Naive thymus-derived CD4-positive, alpha-beta T cell (primary cell): ENCODE measurements at regions of chr3 and their contacts with region 1.

Region 1: GRCh38 chr3:120095226-120095978 is 1.2 kb upstream of the GSK3B start:
- DNase-seq: peak; percentile 71 to 90 (median 79)
- ATAC-seq: peak; percentile 37
- H3K4me3 ChIP-seq: peak overlapping the region; percentile 69
- H3K4me3 Mint-ChIP-seq: no peak overlapping the region
- H3K27ac ChIP-seq: peak overlapping the region; percentile 92
- H3K27ac Mint-ChIP-seq: peak overlapping the region in 1 of 9 donors; percentile 99
- H3K4me1 ChIP-seq: peaks cover 11 to 26% of the 10 kb centered on the region in 2 donors
- H3K4me1 Mint-ChIP-seq: peaks cover 16 to 38% (median 31%) of the 10 kb centered on the region in 7 donors
- H3K27me3 ChIP-seq: no peaks in the 10 kb centered on the region
- H3K27me3 Mint-ChIP-seq: peaks cover 0 to 5% (median 0%) of the 10 kb centered on the region in 5 donors

Region 2: GRCh38 chr3:119463171-119464169 is 631.9 kb before region 1 on chr3 and contains the start of gene TMEM39A:
- CTCF ChIA-PET with region 1: no interaction called
- POLR2A ChIA-PET with region 1: interaction called, 4 read pairs
- intact Hi-C with region 1: loop called (anchors 1 kb)
- DNase-seq: peak; percentile 97 to 99 (median 98)
- ATAC-seq: peak; percentile 91
- H3K4me3 ChIP-seq: peak within 1 kb of the TSS; percentile 93
- H3K4me3 Mint-ChIP-seq: peak within 1 kb of the TSS; percentile 82 to 96 (median 93)
- H3K27ac ChIP-seq: peak within 1 kb of the TSS; percentile 86
- H3K27ac Mint-ChIP-seq: peak within 1 kb of the TSS; percentile 97 to 100 (median 99)
- H3K4me1 ChIP-seq: peaks cover 16 to 26% of the 10 kb centered on the region in 2 donors
- H3K4me1 Mint-ChIP-seq: peaks cover 22 to 56% (median 45%) of the 10 kb centered on the region in 7 donors
- H3K27me3 ChIP-seq: no peaks in the 10 kb centered on the region
- H3K27me3 Mint-ChIP-seq: peaks cover 0 to 4% (median 0%) of the 10 kb centered on the region in 5 donors
- total RNA-seq, gene TMEM39A: 34.9 to 59.5 (median 49.7) TPM

Region 3: GRCh38 chr3:119559441-119559963 is 535.9 kb before region 1 on chr3 and contains the start of gene CD80:
- CTCF ChIA-PET with region 1: no interaction called
- POLR2A ChIA-PET with region 1: no interaction called
- intact Hi-C with region 1: no loop called
- DNase-seq: peak in 7 of 9 donors; percentile 14 to 63 (median 33)
- ATAC-seq: peak; percentile 76
- H3K4me3 ChIP-seq: no peak within 1 kb of the TSS
- H3K4me3 Mint-ChIP-seq: peak within 1 kb of the TSS in 2 of 10 donors; percentile 12 to 81
- H3K27ac ChIP-seq: no peak within 1 kb of the TSS
- H3K27ac Mint-ChIP-seq: peak within 1 kb of the TSS in 2 of 9 donors; percentile 68 to 71
- H3K4me1 ChIP-seq: peaks cover 0 to 6% of the 10 kb centered on the region in 2 donors
- H3K4me1 Mint-ChIP-seq: peaks cover 0 to 64% (median 8%) of the 10 kb centered on the region in 7 donors
- H3K27me3 ChIP-seq: no peaks in the 10 kb centered on the region
- H3K27me3 Mint-ChIP-seq: peaks cover 0 to 5% (median 0%) of the 10 kb centered on the region in 5 donors
- total RNA-seq, gene CD80: 0.13 to 15.1 (median 1.2) TPM in 3 of 5 experiments, not detected in the others

Region 4: DNA sequence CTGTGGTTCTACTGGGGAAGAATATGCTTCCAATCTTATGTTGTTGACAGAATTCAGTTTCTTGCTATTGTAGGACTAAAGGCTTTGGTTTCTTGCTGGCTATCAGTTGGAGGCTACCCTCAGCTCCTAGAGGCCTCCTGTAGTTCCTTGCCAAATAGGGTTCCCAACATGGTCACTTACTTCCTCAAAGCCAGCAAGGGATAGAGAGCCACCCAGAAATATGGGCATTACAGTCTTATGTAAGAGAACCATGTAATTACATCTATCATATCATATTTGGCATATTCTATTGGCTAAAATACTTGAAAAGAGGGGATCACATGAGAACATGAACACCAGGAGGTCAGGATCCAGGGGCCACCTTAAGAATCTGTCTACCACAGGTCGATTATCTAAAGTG is 412.0 kb before region 1 on chr3:
- CTCF ChIA-PET with region 1: no interaction called
- POLR2A ChIA-PET with region 1: no interaction called
- intact Hi-C with region 1: no loop called
- DNase-seq: no peak
- ATAC-seq: no peak
- H3K4me3 ChIP-seq: no peak overlapping the region
- H3K4me3 Mint-ChIP-seq: no peak overlapping the region
- H3K27ac ChIP-seq: no peak overlapping the region
- H3K27ac Mint-ChIP-seq: no peak overlapping the region
- H3K4me1 ChIP-seq: no peaks in the 10 kb centered on the region
- H3K4me1 Mint-ChIP-seq: peaks cover 0 to 4% (median 0%) of the 10 kb centered on the region in 7 donors
- H3K27me3 ChIP-seq: no peaks in the 10 kb centered on the region
- H3K27me3 Mint-ChIP-seq: peaks cover 4 to 14% (median 9%) of the 10 kb centered on the region in 5 donors

Region 5: DNA sequence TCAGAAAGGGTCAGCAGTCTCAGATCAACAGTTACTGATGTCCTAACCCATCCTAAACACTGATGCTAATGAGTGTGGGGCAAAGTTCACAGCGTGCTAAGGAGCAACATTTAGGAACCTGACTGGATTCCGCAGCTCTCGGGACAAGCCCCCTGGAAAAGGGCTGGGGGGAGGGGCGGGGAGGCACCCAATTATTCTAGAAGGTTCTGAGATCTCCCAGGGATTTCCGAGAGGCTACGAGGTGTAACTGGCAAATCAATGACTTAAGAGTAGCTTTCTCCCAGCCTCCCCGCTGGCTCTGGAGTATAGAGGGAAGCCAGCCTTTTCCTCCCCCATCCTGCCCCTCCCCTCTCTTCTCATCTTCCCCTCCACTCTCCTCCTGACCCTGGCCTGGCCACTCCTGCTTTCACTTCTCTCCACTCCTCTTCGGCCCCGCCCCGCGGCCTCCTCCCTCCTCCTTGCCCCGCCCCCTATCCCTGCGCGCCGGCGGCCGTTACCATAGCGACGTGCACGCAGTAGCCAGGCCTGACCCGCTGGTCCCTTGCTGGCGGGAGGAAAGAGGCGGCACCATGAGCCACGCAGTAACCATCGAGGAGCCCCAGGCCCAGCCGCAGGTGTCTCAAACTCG is 392.8 kb before region 1 on chr3 and contains the start of gene CFAP91:
- CTCF ChIA-PET with region 1: no interaction called
- POLR2A ChIA-PET with region 1: no interaction called
- intact Hi-C with region 1: loop called in 1 of 2 experiments (anchors 2 kb)
- DNase-seq: peak; percentile 56 to 81 (median 63)
- ATAC-seq: peak; percentile 97
- H3K4me3 ChIP-seq: peak within 1 kb of the TSS; percentile 61
- H3K4me3 Mint-ChIP-seq: peak within 1 kb of the TSS; percentile 67 to 87 (median 82)
- H3K27ac ChIP-seq: peak within 1 kb of the TSS; percentile 16
- H3K27ac Mint-ChIP-seq: peak within 1 kb of the TSS in 6 of 9 donors; percentile 15 to 47 (median 43)
- H3K4me1 ChIP-seq: peaks cover 0 to 13% of the 10 kb centered on the region in 2 donors
- H3K4me1 Mint-ChIP-seq: peaks cover 16 to 36% (median 30%) of the 10 kb centered on the region in 7 donors
- H3K27me3 ChIP-seq: no peaks in the 10 kb centered on the region
- H3K27me3 Mint-ChIP-seq: peaks cover 0 to 33% (median 3%) of the 10 kb centered on the region in 5 donors
- total RNA-seq, gene CFAP91: 0.13 to 0.32 TPM in 2 of 5 experiments, not detected in the others

Region 6: DNA sequence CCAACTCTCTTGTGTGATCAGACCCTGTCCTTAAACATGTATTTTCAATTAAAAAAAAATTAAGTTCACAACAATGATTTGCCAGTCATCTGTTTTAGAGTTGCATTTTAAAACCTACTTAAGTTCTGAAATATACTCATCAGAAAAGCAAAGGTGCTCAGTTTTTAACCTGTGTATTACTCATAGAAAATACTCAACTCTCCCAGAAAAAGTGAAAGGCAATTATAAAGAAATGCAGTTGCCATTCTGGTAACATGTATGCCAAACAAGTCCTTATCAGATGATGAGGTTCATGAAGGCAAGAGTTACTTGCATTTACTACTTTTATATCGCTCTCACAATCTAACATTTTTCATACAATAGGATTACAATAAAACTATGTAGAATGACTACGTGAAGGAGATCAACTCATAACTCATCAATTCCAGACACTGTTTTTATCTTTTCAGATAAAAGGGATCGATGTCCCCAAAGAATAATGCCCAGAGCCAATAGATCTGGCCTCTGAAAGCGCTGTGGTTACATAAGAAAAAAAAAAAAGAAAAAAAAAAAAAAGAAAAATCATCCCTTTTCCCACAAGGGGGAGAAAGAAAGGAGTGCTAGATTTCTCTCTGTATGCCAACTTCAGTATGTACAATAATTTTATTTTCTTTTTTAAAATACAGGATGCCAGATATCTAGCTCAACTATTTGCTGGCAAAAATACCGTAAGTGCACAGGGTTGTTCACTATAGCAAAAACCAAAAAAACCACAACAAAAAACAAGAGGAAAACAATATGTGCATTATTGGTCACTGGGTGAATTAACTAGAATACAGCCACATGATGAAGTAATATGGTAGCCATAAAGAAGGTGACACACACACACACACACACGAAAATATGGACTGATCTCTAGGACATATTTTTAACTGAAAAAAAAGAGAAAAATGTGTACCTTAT is 176.1 kb before region 1 on chr3:
- CTCF ChIA-PET with region 1: no interaction called
- POLR2A ChIA-PET with region 1: no interaction called
- intact Hi-C with region 1: loop called (anchors 1 to 5 kb)
- DNase-seq: no peak
- ATAC-seq: no peak
- H3K4me3 ChIP-seq: no peak overlapping the region
- H3K4me3 Mint-ChIP-seq: peak overlapping the region in 1 of 10 donors; percentile 45
- H3K27ac ChIP-seq: no peak overlapping the region
- H3K27ac Mint-ChIP-seq: peak overlapping the region in 4 of 9 donors; percentile 16 to 54 (median 43)
- H3K4me1 ChIP-seq: no peaks in the 10 kb centered on the region
- H3K4me1 Mint-ChIP-seq: peaks cover 8 to 37% (median 27%) of the 10 kb centered on the region in 7 donors
- H3K27me3 ChIP-seq: no peaks in the 10 kb centered on the region
- H3K27me3 Mint-ChIP-seq: no peaks in the 10 kb centered on the region

Region 7: DNA sequence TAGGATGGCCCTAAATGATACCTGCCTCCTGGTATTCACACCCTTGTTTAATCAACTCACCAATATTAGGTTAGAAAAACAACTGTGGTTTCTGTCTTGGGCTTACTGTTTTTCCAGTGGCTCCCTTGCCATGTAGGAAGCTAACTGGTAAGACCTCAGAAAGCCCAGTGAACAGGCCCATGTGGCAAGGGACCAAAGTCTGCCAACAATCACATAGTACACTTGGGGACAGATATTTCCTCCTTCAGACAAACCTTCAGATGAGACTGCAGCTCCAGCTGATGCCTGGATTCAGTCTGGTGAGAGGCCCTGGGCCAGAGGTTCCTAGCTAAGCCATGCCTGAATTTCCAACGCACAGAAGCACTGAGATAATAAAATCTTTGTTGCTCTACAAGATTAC is 97.2 kb before region 1 on chr3:
- CTCF ChIA-PET with region 1: no interaction called
- POLR2A ChIA-PET with region 1: no interaction called
- intact Hi-C with region 1: no loop called
- DNase-seq: no peak
- ATAC-seq: no peak
- H3K4me3 ChIP-seq: no peak overlapping the region
- H3K4me3 Mint-ChIP-seq: no peak overlapping the region
- H3K27ac ChIP-seq: no peak overlapping the region
- H3K27ac Mint-ChIP-seq: no peak overlapping the region
- H3K4me1 ChIP-seq: no peaks in the 10 kb centered on the region
- H3K4me1 Mint-ChIP-seq: peaks cover 4 to 75% (median 61%) of the 10 kb centered on the region in 7 donors
- H3K27me3 ChIP-seq: no peaks in the 10 kb centered on the region
- H3K27me3 Mint-ChIP-seq: no peaks in the 10 kb centered on the region

Region 8: GRCh38 chr3:120129718-120130513 is 34.5 kb after region 1 on chr3:
- CTCF ChIA-PET with region 1: no interaction called
- POLR2A ChIA-PET with region 1: no interaction called
- intact Hi-C with region 1: no loop called
- DNase-seq: no peak
- ATAC-seq: no peak
- H3K4me3 ChIP-seq: no peak overlapping the region
- H3K4me3 Mint-ChIP-seq: no peak overlapping the region
- H3K27ac ChIP-seq: no peak overlapping the region
- H3K27ac Mint-ChIP-seq: no peak overlapping the region
- H3K4me1 ChIP-seq: no peaks in the 10 kb centered on the region
- H3K4me1 Mint-ChIP-seq: no peaks in the 10 kb centered on the region
- H3K27me3 ChIP-seq: no peaks in the 10 kb centered on the region
- H3K27me3 Mint-ChIP-seq: peaks cover 0 to 4% (median 0%) of the 10 kb centered on the region in 5 donors

Region 9: GRCh38 chr3:120147072-120147871 is 51.9 kb after region 1 on chr3:
- CTCF ChIA-PET with region 1: interaction called, 3 read pairs
- POLR2A ChIA-PET with region 1: interaction called, 7 read pairs
- intact Hi-C with region 1: loop called in 1 of 2 experiments (anchors 1 kb)
- DNase-seq: peak in 7 of 9 donors; percentile 48 to 78 (median 65)
- ATAC-seq: peak; percentile 91
- H3K4me3 ChIP-seq: no peak overlapping the region
- H3K4me3 Mint-ChIP-seq: no peak overlapping the region
- H3K27ac ChIP-seq: no peak overlapping the region
- H3K27ac Mint-ChIP-seq: peak overlapping the region in 6 of 9 donors; percentile 1 to 61 (median 38)
- H3K4me1 ChIP-seq: no peaks in the 10 kb centered on the region
- H3K4me1 Mint-ChIP-seq: peaks cover 9 to 33% (median 22%) of the 10 kb centered on the region in 7 donors
- H3K27me3 ChIP-seq: no peaks in the 10 kb centered on the region
- H3K27me3 Mint-ChIP-seq: peaks cover 0 to 3% (median 0%) of the 10 kb centered on the region in 5 donors

Region 10: GRCh38 chr3:120742198-120742849 is 646.9 kb after region 1 on chr3 and contains the starts of genes GTF2E1 and RABL3:
- CTCF ChIA-PET with region 1: no interaction called
- POLR2A ChIA-PET with region 1: interaction called, 3 read pairs
- intact Hi-C with region 1: loop called (anchors 1 kb)
- DNase-seq: peak; percentile 86 to 98 (median 97)
- ATAC-seq: peak; percentile 97
- H3K4me3 ChIP-seq: peak within 1 kb of the TSS; percentile 81
- H3K4me3 Mint-ChIP-seq: peak within 1 kb of the TSS; percentile 84 to 97 (median 92)
- H3K27ac ChIP-seq: peak within 1 kb of the TSS; percentile 98
- H3K27ac Mint-ChIP-seq: peak within 1 kb of the TSS; percentile 93 to 99 (median 97)
- H3K4me1 ChIP-seq: peaks cover 16 to 23% of the 10 kb centered on the region in 2 donors
- H3K4me1 Mint-ChIP-seq: peaks cover 26 to 55% (median 47%) of the 10 kb centered on the region in 7 donors
- H3K27me3 ChIP-seq: no peaks in the 10 kb centered on the region
- H3K27me3 Mint-ChIP-seq: no peaks in the 10 kb centered on the region
- total RNA-seq, gene GTF2E1: 8.4 to 27.3 (median 25.3) TPM
- total RNA-seq, gene RABL3: 15.4 to 30.3 (median 23.0) TPM